WTC11 (cell line): ENCODE measurements at regions of chr2 and their contacts with region 1.

Region 1: DNA sequence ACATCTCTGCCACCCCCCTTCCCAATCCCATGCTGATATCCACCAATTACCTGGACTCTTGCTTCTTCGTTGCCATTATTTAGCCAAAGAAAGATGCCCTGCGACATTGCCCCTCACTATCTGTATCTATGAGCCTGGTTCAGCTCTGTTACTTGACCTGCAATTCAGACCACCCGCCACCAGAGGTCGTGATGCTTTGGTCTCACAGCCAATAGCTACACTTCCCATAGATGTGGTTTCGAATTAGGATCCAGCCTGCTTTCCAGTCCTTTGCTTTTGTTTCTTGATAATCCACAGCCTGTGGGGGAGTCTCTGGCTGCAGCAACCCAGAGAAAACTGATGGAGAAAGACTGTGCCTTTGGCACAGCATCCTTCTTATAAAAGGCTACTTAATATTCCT is 239.4 kb downstream of the KLHL29 start:
- DNase-seq: peak; percentile 72
- ATAC-seq: peak; percentile 68
- H3K4me3 Mint-ChIP-seq: no peak overlapping the region
- H3K27ac Mint-ChIP-seq: no peak overlapping the region
- H3K4me1 Mint-ChIP-seq: peaks cover 18% of the 10 kb centered on the region
- H3K27me3 Mint-ChIP-seq: no peaks in the 10 kb centered on the region; the same call in 1 of the 2 replicates
- CTCF ChIP-seq: peak; percentile 73

Region 2: GRCh38 chr2:23159746-23160405 is 464.5 kb before region 1 on chr2:
- CTCF ChIA-PET with region 1: no interaction called
- POLR2A ChIA-PET with region 1: no interaction called
- DNase-seq: no peak
- ATAC-seq: no peak
- H3K4me3 Mint-ChIP-seq: no peak overlapping the region
- H3K27ac Mint-ChIP-seq: no peak overlapping the region
- H3K4me1 Mint-ChIP-seq: 0 out of 2 replicates have a peak, but pooled peaks cover 3% of the 10 kb centered on the region
- H3K27me3 Mint-ChIP-seq: no peaks in the 10 kb centered on the region
- CTCF ChIP-seq: no peak

Region 3: DNA sequence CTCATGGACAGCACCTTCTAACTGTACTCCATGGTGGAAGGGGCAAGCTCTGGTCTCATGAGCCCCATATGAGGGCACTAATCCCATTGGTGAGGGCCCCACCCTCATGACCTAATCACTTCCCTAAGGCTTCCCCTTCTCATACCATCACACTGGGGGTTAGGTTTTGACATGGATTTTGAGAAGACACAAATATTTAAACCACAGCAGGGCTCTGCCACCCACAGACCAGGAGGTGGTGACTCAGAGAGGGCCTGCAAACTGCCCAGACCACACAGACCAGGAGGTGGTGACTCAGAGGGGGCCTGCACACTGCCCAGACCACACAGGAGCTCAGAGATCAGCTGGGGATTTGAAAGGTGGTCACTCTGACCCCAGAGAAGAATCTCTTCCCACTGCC is 17.4 kb before region 1 on chr2:
- CTCF ChIA-PET with region 1: interaction called, 36 read pairs
- POLR2A ChIA-PET with region 1: no interaction called
- DNase-seq: no peak
- ATAC-seq: no peak
- H3K4me3 Mint-ChIP-seq: no peak overlapping the region
- H3K27ac Mint-ChIP-seq: peak overlapping the region; percentile 68; the same call in 1 of the 2 replicates
- H3K4me1 Mint-ChIP-seq: peaks cover 26% of the 10 kb centered on the region
- H3K27me3 Mint-ChIP-seq: no peaks in the 10 kb centered on the region; the same call in 1 of the 2 replicates
- CTCF ChIP-seq: no peak

Region 4: GRCh38 chr2:23636426-23636825 is 12.0 kb after region 1 on chr2:
- CTCF ChIA-PET with region 1: interaction called, 18 read pairs
- POLR2A ChIA-PET with region 1: interaction called, 3 read pairs
- DNase-seq: peak; percentile 45
- ATAC-seq: peak; percentile 85
- H3K4me3 Mint-ChIP-seq: no peak overlapping the region
- H3K27ac Mint-ChIP-seq: no peak overlapping the region
- H3K4me1 Mint-ChIP-seq: 0 out of 2 replicates have a peak, but pooled peaks cover 4% of the 10 kb centered on the region
- H3K27me3 Mint-ChIP-seq: no peaks in the 10 kb centered on the region
- CTCF ChIP-seq: no peak

Region 5: DNA sequence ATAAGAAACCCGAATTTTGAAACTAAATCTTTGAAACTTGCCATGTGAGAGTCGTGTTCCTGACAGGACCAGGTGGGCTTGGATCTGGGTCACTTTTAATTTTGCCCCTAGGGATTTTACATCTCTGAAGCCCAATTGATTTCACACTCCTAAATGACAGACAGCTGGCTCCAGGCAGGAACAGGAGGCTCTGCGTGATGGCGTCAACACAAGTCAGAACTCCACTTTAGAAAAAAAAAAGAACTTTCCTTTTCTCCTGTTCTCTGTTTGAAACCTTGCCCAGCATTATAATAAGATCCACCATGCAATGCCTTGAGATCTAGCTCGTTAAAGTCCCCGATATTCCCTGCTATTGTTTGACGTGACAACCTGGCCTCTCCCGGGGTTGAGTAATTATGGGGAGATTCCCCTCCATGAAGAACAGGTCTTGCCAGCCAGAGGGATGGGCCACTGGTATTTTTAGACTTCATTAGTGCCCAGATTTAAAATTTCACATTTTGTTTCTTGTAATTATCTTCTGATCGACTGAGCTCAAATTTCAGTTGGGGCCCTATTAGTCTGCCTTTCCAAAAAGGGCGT is 20.9 kb after region 1 on chr2:
- CTCF ChIA-PET with region 1: interaction called, 14 read pairs
- POLR2A ChIA-PET with region 1: no interaction called
- DNase-seq: no peak
- ATAC-seq: no peak
- H3K4me3 Mint-ChIP-seq: no peak overlapping the region
- H3K27ac Mint-ChIP-seq: no peak overlapping the region
- H3K4me1 Mint-ChIP-seq: peaks cover 9% of the 10 kb centered on the region
- H3K27me3 Mint-ChIP-seq: peaks cover 3% of the 10 kb centered on the region
- CTCF ChIP-seq: no peak

Region 6: DNA sequence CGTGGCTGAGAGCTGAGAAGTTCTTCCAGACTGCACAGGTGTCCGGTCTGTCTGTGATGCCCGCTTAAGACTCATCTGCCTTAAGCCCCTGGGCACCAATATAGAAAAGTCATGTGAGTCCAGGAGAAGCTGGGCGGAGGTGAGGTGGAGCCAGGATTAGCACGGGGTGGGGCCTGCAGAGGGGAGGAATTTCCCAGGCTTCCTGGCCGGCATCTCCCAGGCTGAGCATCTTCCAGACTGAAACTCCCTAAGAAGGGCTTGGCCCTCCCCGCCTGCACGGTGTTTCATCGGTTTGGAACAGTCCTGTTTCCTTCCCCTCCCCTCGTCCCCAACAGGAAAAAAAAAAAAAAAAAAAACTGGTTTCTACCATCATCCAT is 32.2 kb after region 1 on chr2:
- CTCF ChIA-PET with region 1: interaction called, 11 read pairs
- POLR2A ChIA-PET with region 1: no interaction called
- DNase-seq: no peak
- ATAC-seq: peak; percentile 46; the same call in 1 of the 2 replicates
- H3K4me3 Mint-ChIP-seq: no peak overlapping the region
- H3K27ac Mint-ChIP-seq: no peak overlapping the region
- H3K4me1 Mint-ChIP-seq: no peaks in the 10 kb centered on the region
- H3K27me3 Mint-ChIP-seq: peaks cover 3% of the 10 kb centered on the region; the same call in 1 of the 2 replicates
- CTCF ChIP-seq: no peak